ENCODE measurements at regions of chr10 and their contacts with region 1.

Region 1: GRCh38 chr10:88091490-88092105 is 228.2 kb downstream of the PTEN start:
- DNase-seq: peak; percentile 87
- ATAC-seq: peak; percentile 98
- H3K4me3 Mint-ChIP-seq: no peak overlapping the region
- H3K27ac Mint-ChIP-seq: peak overlapping the region; percentile 55
- H3K4me1 Mint-ChIP-seq: peaks cover 33% of the 10 kb centered on the region
- H3K27me3 Mint-ChIP-seq: peaks cover 32% of the 10 kb centered on the region

Region 2: GRCh38 chr10:87817609-87818504 is 273.7 kb before region 1 on chr10 and contains the start of gene ATAD1:
- CTCF ChIA-PET with region 1: no interaction called
- POLR2A ChIA-PET with region 1: no interaction called
- intact Hi-C with region 1: loop called in 1 of 2 experiments (anchors 2 kb)
- DNase-seq: peak; percentile 93
- ATAC-seq: peak; percentile 88
- H3K4me3 Mint-ChIP-seq: peak within 1 kb of the TSS; percentile 89
- H3K27ac Mint-ChIP-seq: peak within 1 kb of the TSS; percentile 94
- H3K4me1 Mint-ChIP-seq: peaks cover 30% of the 10 kb centered on the region
- H3K27me3 Mint-ChIP-seq: no peaks in the 10 kb centered on the region
- total RNA-seq, gene ATAD1: 34.2 to 46.8 TPM

Region 3: DNA sequence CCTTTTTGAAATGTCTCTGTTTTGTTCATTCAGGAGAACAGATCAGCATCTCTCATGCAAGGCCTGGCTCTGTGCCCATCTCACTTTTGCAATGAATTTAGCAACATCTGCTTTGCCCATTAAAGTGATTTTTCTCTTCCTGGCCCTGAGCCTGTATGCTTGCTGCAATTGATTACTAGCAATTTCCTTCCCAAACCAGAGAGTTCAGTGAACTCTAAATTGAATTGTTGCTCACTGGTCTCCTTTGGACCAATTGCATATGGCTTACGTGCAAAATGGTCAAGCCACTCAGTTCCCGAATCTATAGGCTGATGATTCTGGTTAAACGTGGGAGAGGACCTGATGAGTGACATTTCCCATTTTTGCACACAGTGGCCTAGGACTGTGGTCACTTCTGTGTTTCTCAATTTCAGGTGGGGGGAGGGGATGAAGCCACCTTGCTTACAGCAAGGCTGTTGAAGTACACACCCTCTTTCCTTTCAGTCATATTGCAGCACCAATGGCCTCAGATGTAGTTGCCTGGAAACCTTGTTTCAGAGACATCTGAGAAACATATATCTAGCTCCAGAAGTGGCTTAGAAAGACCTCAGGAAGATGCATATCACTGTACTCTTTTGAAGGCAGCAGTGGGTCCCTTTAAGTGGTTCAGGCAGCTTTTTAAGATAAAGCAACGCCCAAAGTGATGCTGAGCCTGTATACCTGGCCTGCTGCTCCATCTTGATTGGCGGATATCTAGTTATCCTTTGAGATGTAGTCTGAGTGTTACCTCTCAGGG is 26.8 kb before region 1 on chr10:
- CTCF ChIA-PET with region 1: interaction called, 13 read pairs
- POLR2A ChIA-PET with region 1: interaction called, 23 read pairs
- intact Hi-C with region 1: loop called (anchors 1 kb)
- DNase-seq: peak; percentile 52
- ATAC-seq: peak; percentile 49
- H3K4me3 Mint-ChIP-seq: no peak overlapping the region
- H3K27ac Mint-ChIP-seq: no peak overlapping the region
- H3K4me1 Mint-ChIP-seq: peaks cover 69% of the 10 kb centered on the region
- H3K27me3 Mint-ChIP-seq: peaks cover 24% of the 10 kb centered on the region

Region 4: GRCh38 chr10:88152720-88153119 is 61.1 kb after region 1 on chr10:
- CTCF ChIA-PET with region 1: no interaction called
- POLR2A ChIA-PET with region 1: interaction called, 6 read pairs
- intact Hi-C with region 1: loop called in 1 of 2 experiments (anchors 1 kb)
- DNase-seq: peak; percentile 75
- ATAC-seq: peak; percentile 100
- H3K4me3 Mint-ChIP-seq: no peak overlapping the region
- H3K27ac Mint-ChIP-seq: peak overlapping the region; percentile 87
- H3K4me1 Mint-ChIP-seq: peaks cover 20% of the 10 kb centered on the region
- H3K27me3 Mint-ChIP-seq: peaks cover 2% of the 10 kb centered on the region

Region 5: DNA sequence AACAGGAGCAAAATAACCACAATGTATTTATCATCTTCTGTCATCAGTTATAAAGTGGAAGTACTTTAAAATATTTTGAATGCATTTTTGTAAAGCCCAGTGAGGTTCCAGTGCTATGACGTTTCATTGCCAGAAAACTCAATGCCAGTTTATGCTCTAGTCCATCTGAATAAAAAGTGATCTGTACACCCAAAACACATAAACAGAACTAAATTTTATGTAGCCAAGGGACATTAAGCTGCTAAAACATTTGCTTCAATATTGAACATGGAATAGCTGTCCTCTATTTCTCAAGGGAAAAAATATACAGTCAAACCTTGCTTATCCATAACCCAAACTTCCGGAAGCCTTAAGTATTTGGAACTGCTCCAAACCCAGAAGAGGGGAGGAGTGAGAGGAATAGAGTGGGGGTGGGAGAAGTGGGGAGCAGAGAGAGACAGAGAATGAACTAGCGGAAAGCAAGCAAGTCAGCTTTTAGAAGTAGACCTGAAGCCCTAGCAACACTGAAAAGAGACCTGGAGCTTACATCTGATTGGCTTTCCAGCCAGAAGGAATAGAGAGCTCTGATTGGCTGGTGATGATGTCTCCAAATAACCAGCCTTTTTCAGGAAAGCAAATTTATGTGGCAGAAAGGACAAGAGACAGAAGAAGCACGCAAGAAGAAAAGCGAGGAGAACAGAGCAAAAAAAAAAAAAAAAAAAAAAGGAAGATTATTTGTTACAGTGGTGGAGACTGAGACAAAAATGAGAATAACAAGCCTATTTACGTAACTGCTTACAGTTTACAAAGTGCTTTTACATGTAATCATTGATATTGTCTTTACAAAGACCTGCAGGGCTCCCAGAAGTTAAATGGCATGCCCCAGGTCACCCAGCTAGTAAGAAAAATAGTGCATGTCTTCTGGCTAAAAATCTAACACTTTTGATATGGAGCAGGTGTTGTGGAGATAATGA is 295.5 kb after region 1 on chr10:
- CTCF ChIA-PET with region 1: interaction called, 3 read pairs
- POLR2A ChIA-PET with region 1: no interaction called
- intact Hi-C with region 1: loop called in 1 of 2 experiments (anchors 5 kb)
- DNase-seq: no peak
- ATAC-seq: peak; percentile 36
- H3K4me3 Mint-ChIP-seq: no peak overlapping the region
- H3K27ac Mint-ChIP-seq: no peak overlapping the region
- H3K4me1 Mint-ChIP-seq: peaks cover 16% of the 10 kb centered on the region
- H3K27me3 Mint-ChIP-seq: no peaks in the 10 kb centered on the region

Region 6: DNA sequence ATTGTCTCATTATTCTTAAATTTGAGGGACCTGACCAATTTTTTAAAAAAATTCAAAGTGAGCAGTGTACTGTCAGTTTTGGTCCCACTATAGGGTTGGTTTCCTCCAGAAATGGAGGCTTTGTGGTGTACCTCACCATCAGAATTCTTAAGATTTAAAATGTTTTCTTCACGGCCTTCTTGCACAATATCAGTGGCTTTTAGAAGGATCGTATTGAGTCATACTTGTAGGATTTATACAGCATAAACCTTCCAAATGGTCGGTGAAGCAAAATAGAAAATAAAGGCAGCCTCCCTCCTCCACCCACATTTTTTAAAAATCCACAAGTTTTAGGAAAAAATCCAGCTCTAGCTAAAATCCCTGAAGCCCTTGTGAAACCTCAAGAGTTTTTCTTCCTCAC is 365.1 kb after region 1 on chr10:
- CTCF ChIA-PET with region 1: no interaction called
- POLR2A ChIA-PET with region 1: no interaction called
- intact Hi-C with region 1: no loop called
- DNase-seq: no peak
- ATAC-seq: no peak
- H3K4me3 Mint-ChIP-seq: no peak overlapping the region
- H3K27ac Mint-ChIP-seq: no peak overlapping the region
- H3K4me1 Mint-ChIP-seq: no peaks in the 10 kb centered on the region
- H3K27me3 Mint-ChIP-seq: no peaks in the 10 kb centered on the region

Region 7: DNA sequence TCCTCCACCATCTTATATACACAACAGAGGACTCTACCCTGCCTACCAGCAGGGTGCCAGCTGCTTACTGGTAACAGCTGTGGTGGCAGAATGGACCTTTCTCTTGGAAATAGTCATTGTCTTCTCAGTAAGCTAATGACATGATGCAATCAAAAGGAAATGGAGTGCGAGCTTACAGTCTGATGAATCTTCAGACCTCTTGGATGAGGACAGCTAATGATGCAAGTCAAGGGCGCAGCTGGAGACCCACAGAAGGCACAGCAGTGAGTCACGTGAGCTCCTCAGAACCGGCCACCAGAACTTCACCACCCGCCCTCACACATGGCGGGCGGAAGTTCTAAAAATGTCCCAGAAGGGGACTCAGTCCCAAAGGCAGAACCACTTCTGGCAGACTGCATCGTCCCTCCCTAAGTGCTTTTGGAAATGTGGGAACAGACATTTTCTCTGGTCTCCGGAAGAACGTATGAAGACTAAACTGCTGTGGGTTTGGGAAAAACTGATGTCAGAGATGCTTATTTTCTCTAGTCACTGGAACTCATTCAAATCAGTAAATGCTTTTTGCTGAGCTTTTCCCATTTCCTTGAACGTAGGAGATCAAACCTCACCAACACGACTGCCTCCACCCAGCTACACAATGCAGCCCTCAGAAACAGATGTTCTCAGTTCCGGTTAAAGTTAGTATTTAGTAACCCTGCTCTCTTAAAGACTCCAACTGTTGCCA is 995.4 kb after region 1 on chr10:
- CTCF ChIA-PET with region 1: no interaction called
- POLR2A ChIA-PET with region 1: no interaction called
- intact Hi-C with region 1: loop called in 1 of 2 experiments (anchors 10 kb)
- DNase-seq: peak; percentile 53
- ATAC-seq: peak; percentile 55
- H3K4me3 Mint-ChIP-seq: peak overlapping the region; percentile 11
- H3K27ac Mint-ChIP-seq: peak overlapping the region; percentile 78
- H3K4me1 Mint-ChIP-seq: peaks cover 11% of the 10 kb centered on the region
- H3K27me3 Mint-ChIP-seq: peaks cover under 1% of the 10 kb centered on the region